SK-N-SH (cell line): ENCODE measurements at regions of chr20 and their contacts with region 1.

Region 1: GRCh38 chr20:45436732-45437391 is 20.9 kb downstream of the PIGT start:
- DNase-seq: peak; percentile 87
- H3K4me3 ChIP-seq: peak overlapping the region; percentile 63 to 74
- H3K27ac ChIP-seq: peak overlapping the region; percentile 13 to 14; a peak in 2 of 4 replicates
- H3K4me1 ChIP-seq: peaks cover 0 to 3% of the 10 kb centered on the region in 2 experiments; a peak in 2 of 4 replicates
- H3K27me3 ChIP-seq: no peaks in the 10 kb centered on the region
- CTCF ChIP-seq: peak; percentile 93
- EP300 ChIP-seq: no peak
- RAD21 ChIP-seq: peak; percentile 92

Region 2: GRCh38 chr20:45114465-45115385 is 322.1 kb before region 1 on chr20 and contains the start of gene WFDC5:
- CTCF ChIA-PET with region 1: no interaction called
- POLR2A ChIA-PET with region 1: no interaction called
- DNase-seq: no peak
- H3K4me3 ChIP-seq: no peak within 1 kb of the TSS
- H3K27ac ChIP-seq: no peak within 1 kb of the TSS
- H3K4me1 ChIP-seq: no peaks in the 10 kb centered on the region
- H3K27me3 ChIP-seq: no peaks in the 10 kb centered on the region; the same call in 1 of the 2 replicates
- CTCF ChIP-seq: no peak
- EP300 ChIP-seq: no peak
- RAD21 ChIP-seq: no peak
- polyA plus RNA-seq, gene WFDC5: 0.08 and 0.11 TPM in 2 replicates

Region 3: DNA sequence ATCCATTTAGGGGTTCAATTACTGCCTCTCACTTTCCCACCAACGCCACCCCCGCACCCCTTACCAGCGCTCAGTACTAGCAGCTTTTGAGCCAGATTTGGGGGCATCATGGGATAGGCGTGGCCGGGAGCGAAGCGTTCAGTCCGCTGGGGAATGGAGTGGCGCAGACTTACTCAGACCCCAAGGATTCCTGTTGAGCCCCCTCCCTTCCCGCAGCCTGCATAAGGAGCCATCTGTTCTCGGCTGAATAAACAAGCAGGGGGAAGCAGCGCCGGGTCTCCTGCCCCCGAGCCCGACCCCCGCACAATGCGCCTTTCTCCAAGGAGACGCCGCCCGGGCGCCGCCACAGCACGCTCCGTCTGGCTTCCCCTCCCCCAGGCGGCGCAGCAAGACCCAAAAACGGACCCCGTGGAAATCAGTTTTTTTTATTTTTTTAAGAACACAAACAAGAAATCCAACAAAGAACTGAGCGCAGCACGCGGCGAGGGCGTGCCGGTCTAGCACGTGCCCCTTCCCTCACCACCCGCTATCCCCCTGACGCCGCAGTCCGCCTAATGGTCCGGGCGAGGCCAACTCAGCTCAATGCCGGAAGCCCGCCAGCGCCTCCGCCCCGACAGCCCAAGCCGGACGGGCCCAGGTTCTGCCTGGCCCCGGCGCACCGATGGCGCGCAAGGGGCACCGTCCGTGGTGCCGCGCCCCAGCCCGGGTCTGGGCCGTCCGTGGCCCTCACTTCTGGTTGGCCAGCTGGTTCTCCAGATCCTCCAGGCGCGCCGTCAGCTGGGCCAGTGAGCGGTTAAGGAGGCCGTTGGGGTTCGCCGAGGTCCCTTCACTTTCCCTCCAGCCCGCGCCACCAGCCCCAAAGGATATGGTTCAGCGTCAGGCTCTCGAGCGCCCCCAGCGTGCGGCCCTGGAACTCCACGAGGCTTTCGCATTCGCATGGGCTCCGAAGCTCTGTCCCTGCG is 143.5 kb before region 1 on chr20:
- CTCF ChIA-PET with region 1: interaction called, 11 read pairs
- POLR2A ChIA-PET with region 1: no interaction called
- DNase-seq: peak; percentile 92
- H3K4me3 ChIP-seq: peak overlapping the region; percentile 46 to 72
- H3K27ac ChIP-seq: no peak overlapping the region
- H3K4me1 ChIP-seq: peaks cover 0 to 3% of the 10 kb centered on the region in 2 experiments; a peak in 1 of 4 replicates
- H3K27me3 ChIP-seq: no peaks in the 10 kb centered on the region
- CTCF ChIP-seq: peak; percentile 83
- EP300 ChIP-seq: no peak
- RAD21 ChIP-seq: peak; percentile 31

Region 4: DNA sequence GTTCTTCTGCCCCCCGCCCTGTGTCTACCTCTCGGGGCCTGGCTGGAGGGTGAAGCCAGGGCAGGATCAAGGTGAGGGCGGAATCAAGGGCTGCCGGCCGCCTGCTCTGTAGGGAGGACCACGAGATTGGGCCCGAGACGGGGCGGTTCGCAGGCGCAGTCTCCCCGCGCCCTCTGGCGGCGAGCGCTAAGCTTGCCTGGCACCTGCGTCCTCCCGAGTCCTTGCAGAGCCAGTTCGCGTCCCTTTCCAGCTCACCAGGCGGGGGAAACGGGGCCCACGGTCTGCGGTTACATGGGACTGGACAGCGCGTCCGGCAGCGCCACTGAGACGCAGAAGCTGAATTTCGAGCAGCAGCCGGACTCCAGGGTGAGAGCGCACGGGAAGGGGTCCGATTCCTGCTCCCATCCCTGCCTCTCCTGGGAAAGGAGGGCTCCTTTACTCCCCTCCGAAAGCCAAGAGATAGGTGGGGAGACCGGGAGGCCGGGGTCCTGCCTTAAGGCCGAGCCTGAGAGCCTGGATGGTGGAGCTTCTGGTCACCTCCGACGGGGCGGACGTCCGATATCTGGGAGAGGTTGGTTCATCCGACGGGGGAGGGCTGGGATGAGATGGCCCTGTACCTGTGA is 125.2 kb before region 1 on chr20:
- CTCF ChIA-PET with region 1: interaction called, 122 read pairs
- POLR2A ChIA-PET with region 1: no interaction called
- DNase-seq: peak; percentile 75
- H3K4me3 ChIP-seq: no peak overlapping the region
- H3K27ac ChIP-seq: no peak overlapping the region
- H3K4me1 ChIP-seq: no peaks in the 10 kb centered on the region
- H3K27me3 ChIP-seq: peaks cover 8% of the 10 kb centered on the region; the same call in 1 of the 2 replicates
- CTCF ChIP-seq: peak; percentile 48
- EP300 ChIP-seq: no peak
- RAD21 ChIP-seq: peak; percentile 37

Region 5: GRCh38 chr20:45341939-45342859 is 94.7 kb before region 1 on chr20:
- CTCF ChIA-PET with region 1: interaction called, 11 read pairs
- POLR2A ChIA-PET with region 1: no interaction called
- DNase-seq: peak; percentile 79
- H3K4me3 ChIP-seq: peak overlapping the region; percentile 27 to 31
- H3K27ac ChIP-seq: peak overlapping the region; percentile 90 to 96
- H3K4me1 ChIP-seq: peaks cover 72 to 74% of the 10 kb centered on the region in 2 experiments
- H3K27me3 ChIP-seq: no peaks in the 10 kb centered on the region
- CTCF ChIP-seq: no peak
- EP300 ChIP-seq: peak in 1 of 2 experiments; percentile 45; a peak in 1 of 4 replicates
- RAD21 ChIP-seq: no peak

Region 6: GRCh38 chr20:45362804-45363610 is 73.9 kb before region 1 on chr20 and contains the start of gene SYS1:
- CTCF ChIA-PET with region 1: interaction called, 143 read pairs
- POLR2A ChIA-PET with region 1: interaction called, 21 read pairs
- DNase-seq: peak; percentile 96
- H3K4me3 ChIP-seq: peak within 1 kb of the TSS; percentile 80 to 92
- H3K27ac ChIP-seq: peak within 1 kb of the TSS; percentile 91 to 97
- H3K4me1 ChIP-seq: peaks cover 0 to 11% of the 10 kb centered on the region in 2 experiments; a peak in 2 of 4 replicates
- H3K27me3 ChIP-seq: no peaks in the 10 kb centered on the region
- CTCF ChIP-seq: peak; percentile 88
- EP300 ChIP-seq: peak; percentile 13 to 15; a peak in 1 of 4 replicates
- RAD21 ChIP-seq: peak; percentile 87
- polyA plus RNA-seq, gene SYS1: 26.5 and 26.9 TPM in 2 replicates

Region 7: GRCh38 chr20:45406259-45407066 is 30.4 kb before region 1 on chr20:
- CTCF ChIA-PET with region 1: interaction called, 26 read pairs
- POLR2A ChIA-PET with region 1: no interaction called
- DNase-seq: peak; percentile 80
- H3K4me3 ChIP-seq: peak overlapping the region; percentile 66 to 76
- H3K27ac ChIP-seq: no peak overlapping the region; a peak in 1 of 4 replicates
- H3K4me1 ChIP-seq: peaks cover 0 to 8% of the 10 kb centered on the region in 2 experiments; a peak in 1 of 4 replicates
- H3K27me3 ChIP-seq: no peaks in the 10 kb centered on the region
- CTCF ChIP-seq: no peak
- EP300 ChIP-seq: no peak
- RAD21 ChIP-seq: no peak

Region 8: GRCh38 chr20:45450097-45450818 is 13.4 kb after region 1 on chr20:
- CTCF ChIA-PET with region 1: interaction called, 30 read pairs
- POLR2A ChIA-PET with region 1: interaction called, 3 read pairs
- DNase-seq: peak; percentile 41
- H3K4me3 ChIP-seq: no peak overlapping the region
- H3K27ac ChIP-seq: no peak overlapping the region
- H3K4me1 ChIP-seq: no peaks in the 10 kb centered on the region
- H3K27me3 ChIP-seq: peaks cover 17% of the 10 kb centered on the region; the same call in 1 of the 2 replicates
- CTCF ChIP-seq: peak; percentile 71
- EP300 ChIP-seq: no peak
- RAD21 ChIP-seq: peak; percentile 63

Region 9: DNA sequence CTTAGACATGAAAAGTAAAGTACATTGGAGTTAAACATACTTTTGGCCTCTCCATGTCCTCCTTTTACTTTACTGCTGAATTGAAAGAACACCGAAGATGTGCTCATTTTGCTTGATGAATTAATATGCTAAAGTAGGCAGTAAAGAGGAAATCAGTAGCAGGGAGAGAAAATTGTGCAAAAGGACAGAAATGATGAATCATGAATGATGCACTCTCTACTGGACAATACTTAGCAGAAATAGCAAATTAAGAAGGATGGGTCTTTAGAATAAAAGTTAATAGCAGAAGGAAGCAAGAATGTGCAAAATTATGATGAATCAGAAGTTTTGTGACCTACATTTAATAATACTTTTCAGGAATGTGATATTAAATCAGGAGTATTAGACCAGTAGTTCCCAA is 87.0 kb after region 1 on chr20:
- CTCF ChIA-PET with region 1: no interaction called
- POLR2A ChIA-PET with region 1: no interaction called
- DNase-seq: no peak
- H3K4me3 ChIP-seq: no peak overlapping the region
- H3K27ac ChIP-seq: no peak overlapping the region
- H3K4me1 ChIP-seq: no peaks in the 10 kb centered on the region
- H3K27me3 ChIP-seq: no peaks in the 10 kb centered on the region; the same call in 1 of the 2 replicates
- CTCF ChIP-seq: no peak
- EP300 ChIP-seq: no peak
- RAD21 ChIP-seq: no peak